CD8-positive, alpha-beta T cell (primary cell): ENCODE measurements at regions of chr14 and their contacts with region 1.

Region 1: DNA sequence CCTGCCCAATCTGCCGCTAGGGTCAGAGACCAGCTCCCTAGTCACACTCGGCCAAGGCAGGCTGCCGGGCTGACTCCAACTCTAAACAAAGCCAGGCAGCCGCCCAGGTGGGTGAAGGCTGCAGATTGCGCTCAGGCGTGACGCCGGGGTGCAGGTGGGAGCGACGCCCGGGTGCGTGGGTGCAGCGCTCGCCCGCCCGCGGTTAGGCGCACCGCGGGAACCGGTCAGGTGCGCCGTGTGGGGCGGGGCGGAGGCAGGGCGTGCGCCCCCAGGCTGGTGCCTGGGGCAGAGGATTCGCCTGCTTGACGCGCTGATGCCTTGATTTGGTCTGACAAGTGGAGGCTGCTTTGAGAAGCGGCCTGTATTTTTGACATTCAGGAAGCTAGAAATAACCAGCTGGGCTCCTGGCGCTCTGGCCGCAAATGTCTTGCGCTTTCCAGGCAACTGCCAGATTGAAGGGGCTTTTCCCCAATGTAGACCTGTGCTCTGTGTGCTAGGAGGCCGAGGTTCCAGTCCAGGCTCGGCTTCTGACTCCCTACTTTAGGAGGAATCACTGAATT is 126.7 kb upstream of the HIF1A start:
- DNase-seq: peak; percentile 22 to 77 (median 68)
- ATAC-seq: peak; percentile 73
- H3K4me3 ChIP-seq: peak overlapping the region; percentile 10 to 17
- H3K4me3 Mint-ChIP-seq: peak overlapping the region; percentile 71
- H3K27ac ChIP-seq: no peak overlapping the region
- H3K27ac Mint-ChIP-seq: peak overlapping the region; percentile 86
- H3K4me1 ChIP-seq: peaks cover 30% of the 10 kb centered on the region
- H3K4me1 Mint-ChIP-seq: peaks cover 45% of the 10 kb centered on the region
- H3K27me3 ChIP-seq: no peaks in the 10 kb centered on the region
- H3K27me3 Mint-ChIP-seq: no peaks in the 10 kb centered on the region
- CTCF ChIP-seq: no peak

Region 2: GRCh38 chr14:59836116-59836515 is 1732.5 kb before region 1 on chr14:
- CTCF ChIA-PET with region 1: no interaction called
- POLR2A ChIA-PET with region 1: no interaction called
- intact Hi-C with region 1: no loop called
- DNase-seq: no peak
- ATAC-seq: no peak
- H3K4me3 ChIP-seq: no peak overlapping the region
- H3K4me3 Mint-ChIP-seq: no peak overlapping the region
- H3K27ac ChIP-seq: no peak overlapping the region
- H3K27ac Mint-ChIP-seq: no peak overlapping the region
- H3K4me1 ChIP-seq: no peaks in the 10 kb centered on the region
- H3K4me1 Mint-ChIP-seq: no peaks in the 10 kb centered on the region
- H3K27me3 ChIP-seq: no peaks in the 10 kb centered on the region
- H3K27me3 Mint-ChIP-seq: peaks cover 25% of the 10 kb centered on the region
- CTCF ChIP-seq: no peak

Region 3: GRCh38 chr14:61609191-61609843 is 40.7 kb after region 1 on chr14:
- CTCF ChIA-PET with region 1: no interaction called
- POLR2A ChIA-PET with region 1: no interaction called
- intact Hi-C with region 1: loop called in 1 of 2 experiments (anchors 5 kb)
- DNase-seq: no peak
- ATAC-seq: no peak
- H3K4me3 ChIP-seq: no peak overlapping the region
- H3K4me3 Mint-ChIP-seq: no peak overlapping the region
- H3K27ac ChIP-seq: no peak overlapping the region
- H3K27ac Mint-ChIP-seq: no peak overlapping the region
- H3K4me1 ChIP-seq: no peaks in the 10 kb centered on the region
- H3K4me1 Mint-ChIP-seq: peaks cover 9% of the 10 kb centered on the region
- H3K27me3 ChIP-seq: no peaks in the 10 kb centered on the region
- H3K27me3 Mint-ChIP-seq: no peaks in the 10 kb centered on the region
- CTCF ChIP-seq: no peak

Region 4: GRCh38 chr14:61719344-61720293 is 151.0 kb after region 1 on chr14:
- CTCF ChIA-PET with region 1: no interaction called
- POLR2A ChIA-PET with region 1: no interaction called
- intact Hi-C with region 1: loop called in 1 of 2 experiments (anchors 5 kb)
- DNase-seq: peak in 3 of 9 experiments; percentile 10 to 66 (median 47)
- ATAC-seq: peak; percentile 84
- H3K4me3 ChIP-seq: no peak overlapping the region
- H3K4me3 Mint-ChIP-seq: peak overlapping the region; percentile 46
- H3K27ac ChIP-seq: peak overlapping the region in 1 of 2 experiments; percentile 27
- H3K27ac Mint-ChIP-seq: peak overlapping the region; percentile 88
- H3K4me1 ChIP-seq: peaks cover 47% of the 10 kb centered on the region
- H3K4me1 Mint-ChIP-seq: peaks cover 68% of the 10 kb centered on the region
- H3K27me3 ChIP-seq: no peaks in the 10 kb centered on the region
- H3K27me3 Mint-ChIP-seq: no peaks in the 10 kb centered on the region
- CTCF ChIP-seq: no peak